ENCODE measurements at regions of chr4 and their contacts with region 1.

Region 1: DNA sequence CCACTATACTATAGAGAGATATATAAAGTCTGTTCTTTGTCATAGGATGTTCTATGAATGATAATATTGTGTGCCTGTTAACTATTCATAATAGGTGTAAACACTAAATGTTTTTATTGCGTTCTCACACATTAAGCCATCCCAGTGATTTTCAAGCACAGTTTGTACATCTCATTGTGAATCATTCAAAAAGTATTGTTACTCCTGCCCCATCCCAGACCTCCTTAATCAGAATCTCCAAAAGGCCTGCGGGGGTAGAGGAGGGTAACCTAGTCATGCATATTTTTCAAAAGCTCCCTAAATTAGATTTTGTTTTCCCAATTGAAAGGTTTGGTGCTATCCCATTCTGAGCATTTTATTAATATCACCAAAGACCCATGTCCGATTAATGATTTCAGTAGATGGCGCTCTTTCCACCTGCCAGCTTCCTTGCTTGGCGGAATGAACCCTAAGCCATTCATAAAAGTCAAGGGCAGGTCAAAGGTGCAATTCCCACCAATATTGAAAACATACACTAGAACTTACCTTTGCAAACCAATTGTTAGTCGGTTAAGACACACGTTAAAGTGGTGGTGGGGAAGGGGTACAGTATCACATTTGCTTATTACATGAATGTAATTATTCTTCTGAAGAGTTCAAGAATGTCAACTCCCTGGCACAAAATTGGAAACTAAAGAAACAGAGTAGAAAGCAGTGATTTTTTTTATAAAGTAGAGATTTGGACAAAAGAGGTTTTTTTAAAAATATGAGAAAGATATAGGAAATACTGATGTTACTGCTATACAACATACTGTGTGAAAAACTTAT is 5.8 kb upstream of the TET2 start:
- DNase-seq: no peak
- H3K4me3 ChIP-seq: no peak overlapping the region
- H3K27ac ChIP-seq: no peak overlapping the region
- H3K4me1 ChIP-seq: peaks cover 0 to under 1% (median 0%) of the 10 kb centered on the region in 4 experiments; a peak in 2 of 7 replicates
- H3K27me3 ChIP-seq: peaks cover 15 to 34% (median 31%) of the 10 kb centered on the region in 4 experiments
- CTCF ChIP-seq: peak in 2 of 3 experiments; percentile 65 to 72; a peak in 3 of 4 replicates
- EP300 ChIP-seq: no peak
- POLR2A ChIP-seq: no peak
- RAD21 ChIP-seq: peak; percentile 85 to 87

Region 2: GRCh38 chr4:104728380-104729122 is 412.3 kb before region 1 on chr4:
- CTCF ChIA-PET with region 1: no interaction called
- POLR2A ChIA-PET with region 1: no interaction called
- DNase-seq: no peak
- H3K4me3 ChIP-seq: no peak overlapping the region
- H3K27ac ChIP-seq: no peak overlapping the region
- H3K4me1 ChIP-seq: no peaks in the 10 kb centered on the region
- H3K27me3 ChIP-seq: no peaks in the 10 kb centered on the region
- CTCF ChIP-seq: no peak
- EP300 ChIP-seq: no peak
- POLR2A ChIP-seq: no peak
- RAD21 ChIP-seq: no peak

Region 3: GRCh38 chr4:105126158-105126937 is 14.5 kb before region 1 on chr4:
- CTCF ChIA-PET with region 1: interaction called, 11 read pairs
- POLR2A ChIA-PET with region 1: no interaction called
- DNase-seq: no peak
- H3K4me3 ChIP-seq: no peak overlapping the region
- H3K27ac ChIP-seq: no peak overlapping the region
- H3K4me1 ChIP-seq: no peaks in the 10 kb centered on the region
- H3K27me3 ChIP-seq: no peaks in the 10 kb centered on the region
- CTCF ChIP-seq: no peak
- EP300 ChIP-seq: no peak
- POLR2A ChIP-seq: no peak
- RAD21 ChIP-seq: no peak

Region 4: DNA sequence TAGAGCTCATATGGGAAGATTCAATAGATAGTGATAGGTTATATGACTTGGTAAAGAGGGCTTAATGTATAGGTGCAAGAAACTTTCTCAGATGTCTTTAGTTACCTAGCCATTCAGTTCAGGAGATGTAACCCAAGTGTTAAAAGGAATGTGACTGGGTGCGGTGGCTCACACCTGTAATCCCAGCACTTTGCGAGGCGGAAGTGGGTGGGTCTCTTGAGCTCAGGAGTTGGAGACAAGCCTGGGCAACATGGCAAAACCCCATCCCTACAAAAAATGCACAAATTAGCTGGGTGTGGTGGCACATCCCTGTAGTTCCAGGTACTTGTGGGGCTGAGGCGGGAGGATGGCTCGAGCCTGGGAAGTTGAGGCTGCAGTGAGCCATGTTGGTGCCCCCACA is 13.7 kb after region 1 on chr4:
- CTCF ChIA-PET with region 1: no interaction called
- POLR2A ChIA-PET with region 1: no interaction called
- DNase-seq: no peak
- H3K4me3 ChIP-seq: no peak overlapping the region
- H3K27ac ChIP-seq: no peak overlapping the region
- H3K4me1 ChIP-seq: peaks cover 0 to 5% (median 1%) of the 10 kb centered on the region in 4 experiments; a peak in 2 of 7 replicates
- H3K27me3 ChIP-seq: peaks cover 8 to 16% (median 11%) of the 10 kb centered on the region in 4 experiments
- CTCF ChIP-seq: no peak
- EP300 ChIP-seq: no peak
- POLR2A ChIP-seq: no peak
- RAD21 ChIP-seq: no peak

Region 5: DNA sequence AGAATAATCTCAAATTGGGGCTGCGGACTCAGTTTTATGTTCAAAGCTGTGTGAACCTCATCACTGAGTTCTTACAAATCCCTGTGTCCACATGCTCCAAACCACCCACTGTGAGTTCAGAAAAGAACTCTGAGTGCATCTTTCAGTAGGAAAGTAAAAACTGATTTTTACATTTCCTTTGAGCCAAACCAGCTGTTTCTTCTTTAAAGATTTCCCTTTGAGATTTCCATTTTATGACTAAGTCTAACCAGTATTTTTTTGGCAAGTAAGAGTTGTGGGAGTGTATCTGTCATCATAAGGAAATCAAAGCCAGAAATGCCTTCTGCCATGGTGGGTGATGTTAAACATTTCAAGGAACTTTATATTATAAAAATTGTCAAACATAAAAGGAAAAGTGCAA is 105.8 kb after region 1 on chr4:
- CTCF ChIA-PET with region 1: no interaction called
- POLR2A ChIA-PET with region 1: no interaction called
- DNase-seq: no peak
- H3K4me3 ChIP-seq: no peak overlapping the region
- H3K27ac ChIP-seq: no peak overlapping the region
- H3K4me1 ChIP-seq: 0 out of 7 replicates have a peak, but pooled peaks cover 0 to 2% (median 0%) of the 10 kb centered on the region in 4 experiments
- H3K27me3 ChIP-seq: no peaks in the 10 kb centered on the region
- CTCF ChIP-seq: no peak
- EP300 ChIP-seq: no peak
- POLR2A ChIP-seq: no peak
- RAD21 ChIP-seq: no peak

Region 6: GRCh38 chr4:105840426-105841174 is 699.7 kb after region 1 on chr4:
- CTCF ChIA-PET with region 1: no interaction called
- POLR2A ChIA-PET with region 1: no interaction called
- DNase-seq: no peak
- H3K4me3 ChIP-seq: no peak overlapping the region
- H3K27ac ChIP-seq: no peak overlapping the region
- H3K4me1 ChIP-seq: peaks cover 0 to 4% (median 0%) of the 10 kb centered on the region in 4 experiments; a peak in 1 of 7 replicates
- H3K27me3 ChIP-seq: no peaks in the 10 kb centered on the region
- CTCF ChIP-seq: no peak
- EP300 ChIP-seq: no peak
- POLR2A ChIP-seq: no peak
- RAD21 ChIP-seq: no peak

Measured in H1 (cell line).